Activated CD8-positive, alpha-beta T cell treated with anti-CD3 and anti-CD28 coated beads, Interleukin-2, amount 10 ng/mL, durations not matched to agents 7 days and 5 days (primary cell): ENCODE measurements at regions of chr17 and their contacts with region 1.

Region 1: DNA sequence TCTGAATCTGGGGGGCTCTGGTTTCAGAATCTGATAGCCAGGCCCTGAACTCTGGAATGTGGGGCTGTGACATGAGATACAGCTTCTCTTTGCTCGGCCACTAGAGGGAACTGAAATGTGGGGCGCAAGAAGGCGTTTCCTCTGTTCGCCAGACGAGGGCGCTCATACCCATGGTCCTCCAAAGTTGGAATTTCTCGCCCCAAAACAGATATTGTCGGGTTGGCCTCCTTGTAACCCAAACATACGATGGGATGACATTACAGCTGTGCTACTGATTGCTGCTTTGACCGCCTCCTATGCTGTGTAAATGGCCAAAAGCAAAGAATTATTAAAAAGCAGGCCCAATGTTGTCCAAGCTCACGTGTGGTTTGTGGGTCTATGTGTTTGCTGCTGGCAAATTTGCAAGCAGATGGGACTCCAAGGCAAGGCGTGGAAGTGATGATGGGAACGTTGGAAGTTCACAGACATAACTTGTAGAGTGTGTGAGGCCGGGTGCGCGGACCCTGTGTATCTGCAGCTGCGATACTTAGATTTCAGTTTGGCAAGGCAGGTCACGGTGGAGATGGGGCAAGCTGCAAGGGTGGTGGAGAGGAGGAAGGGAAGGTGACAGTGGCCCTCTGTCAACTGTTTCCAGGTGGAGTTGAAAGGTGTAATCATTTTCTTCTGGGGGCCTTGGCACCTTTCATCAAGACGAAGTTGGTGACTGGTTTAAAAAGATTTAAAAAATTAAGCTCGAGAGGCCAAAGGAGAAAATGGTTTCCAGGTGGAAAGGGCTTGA is 13.0 kb upstream of the MSI2 start:
- DNase-seq: peak; percentile 85
- ATAC-seq: peak; percentile 80
- H3K4me3 Mint-ChIP-seq: no peak overlapping the region
- H3K27ac Mint-ChIP-seq: no peak overlapping the region
- H3K4me1 Mint-ChIP-seq: peaks cover 9% of the 10 kb centered on the region
- H3K27me3 Mint-ChIP-seq: peaks cover 17% of the 10 kb centered on the region

Region 2: DNA sequence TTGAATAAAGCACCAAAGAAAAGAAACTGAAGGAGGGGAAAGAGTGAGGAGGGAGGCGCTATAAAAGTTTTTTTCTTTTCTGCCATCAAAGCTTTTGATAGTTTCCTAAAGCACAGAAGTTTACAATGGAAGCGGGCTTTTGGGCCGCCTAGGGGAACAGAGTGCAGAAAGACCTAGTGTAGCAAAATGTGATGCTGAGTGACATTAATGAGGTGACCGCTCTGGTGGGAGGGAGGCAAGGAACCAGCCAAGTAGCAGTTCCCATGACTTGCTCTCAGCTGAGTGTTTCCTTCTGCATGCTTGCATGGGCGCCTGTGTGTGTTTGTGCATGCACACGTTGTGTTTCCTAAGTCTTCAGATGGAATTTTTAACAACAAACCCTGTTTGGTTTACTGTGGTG is 28.5 kb after region 1 on chr17:
- CTCF ChIA-PET with region 1: interaction called, 23 read pairs
- POLR2A ChIA-PET with region 1: no interaction called
- DNase-seq: no peak
- ATAC-seq: no peak
- H3K4me3 Mint-ChIP-seq: no peak overlapping the region
- H3K27ac Mint-ChIP-seq: no peak overlapping the region
- H3K4me1 Mint-ChIP-seq: peaks cover 41% of the 10 kb centered on the region
- H3K27me3 Mint-ChIP-seq: no peaks in the 10 kb centered on the region

Region 3: GRCh38 chr17:57408071-57408811 is 164.9 kb after region 1 on chr17:
- CTCF ChIA-PET with region 1: interaction called, 62 read pairs
- POLR2A ChIA-PET with region 1: no interaction called
- DNase-seq: peak; percentile 72
- ATAC-seq: peak; percentile 73
- H3K4me3 Mint-ChIP-seq: peak overlapping the region; percentile 59
- H3K27ac Mint-ChIP-seq: peak overlapping the region; percentile 73
- H3K4me1 Mint-ChIP-seq: peaks cover 52% of the 10 kb centered on the region
- H3K27me3 Mint-ChIP-seq: no peaks in the 10 kb centered on the region

Region 4: GRCh38 chr17:57480438-57481196 is 237.3 kb after region 1 on chr17:
- CTCF ChIA-PET with region 1: interaction called, 21 read pairs
- POLR2A ChIA-PET with region 1: no interaction called
- DNase-seq: peak; percentile 53
- ATAC-seq: peak; percentile 73
- H3K4me3 Mint-ChIP-seq: peak overlapping the region; percentile 35
- H3K27ac Mint-ChIP-seq: peak overlapping the region; percentile 71
- H3K4me1 Mint-ChIP-seq: peaks cover 60% of the 10 kb centered on the region
- H3K27me3 Mint-ChIP-seq: no peaks in the 10 kb centered on the region

Region 5: DNA sequence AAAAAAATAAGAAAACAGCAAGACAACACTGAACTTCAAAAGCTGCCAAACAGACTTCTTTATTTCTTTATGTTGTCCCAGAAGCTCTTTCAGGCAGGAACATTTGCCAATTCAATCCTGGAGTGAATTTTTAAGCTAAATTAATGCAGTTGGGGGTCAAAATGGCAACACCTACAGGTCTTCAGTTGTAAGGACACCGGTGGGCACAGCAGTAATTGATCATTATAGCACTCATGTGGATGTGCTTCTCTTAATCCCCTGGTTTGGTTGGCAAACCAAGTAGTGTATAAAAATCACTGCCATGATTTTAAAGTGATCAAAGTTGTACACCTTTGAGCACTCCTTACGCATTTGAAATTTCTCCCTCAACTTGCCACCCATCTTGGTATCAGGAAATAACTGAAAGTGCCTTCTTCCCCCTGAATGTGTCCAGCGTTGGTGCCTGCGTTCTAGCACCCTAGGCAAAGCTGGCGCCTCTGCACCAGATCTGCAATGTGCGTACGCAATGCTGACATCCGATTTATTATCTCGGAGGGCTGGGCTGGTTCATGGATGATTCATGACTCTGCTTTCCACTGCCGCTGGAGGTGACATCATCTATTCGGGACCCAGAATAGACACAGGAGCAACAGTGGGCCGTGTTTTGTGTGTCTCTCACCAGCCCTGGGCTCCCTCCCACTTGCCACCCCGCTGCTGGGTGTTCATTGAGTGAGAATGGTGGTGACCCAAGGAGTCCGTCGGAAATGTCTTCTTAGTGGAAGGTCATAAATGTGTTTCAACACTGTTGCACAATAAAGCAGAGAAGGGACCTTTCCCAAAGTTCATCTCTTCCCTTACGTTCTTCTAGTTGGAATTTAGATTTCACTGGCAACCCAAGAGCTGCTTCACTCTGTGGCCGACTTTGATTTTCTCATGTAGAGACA is 298.4 kb after region 1 on chr17:
- CTCF ChIA-PET with region 1: interaction called, 14 read pairs
- POLR2A ChIA-PET with region 1: no interaction called
- DNase-seq: no peak
- ATAC-seq: no peak
- H3K4me3 Mint-ChIP-seq: no peak overlapping the region
- H3K27ac Mint-ChIP-seq: no peak overlapping the region
- H3K4me1 Mint-ChIP-seq: peaks cover 18% of the 10 kb centered on the region
- H3K27me3 Mint-ChIP-seq: no peaks in the 10 kb centered on the region

Region 6: DNA sequence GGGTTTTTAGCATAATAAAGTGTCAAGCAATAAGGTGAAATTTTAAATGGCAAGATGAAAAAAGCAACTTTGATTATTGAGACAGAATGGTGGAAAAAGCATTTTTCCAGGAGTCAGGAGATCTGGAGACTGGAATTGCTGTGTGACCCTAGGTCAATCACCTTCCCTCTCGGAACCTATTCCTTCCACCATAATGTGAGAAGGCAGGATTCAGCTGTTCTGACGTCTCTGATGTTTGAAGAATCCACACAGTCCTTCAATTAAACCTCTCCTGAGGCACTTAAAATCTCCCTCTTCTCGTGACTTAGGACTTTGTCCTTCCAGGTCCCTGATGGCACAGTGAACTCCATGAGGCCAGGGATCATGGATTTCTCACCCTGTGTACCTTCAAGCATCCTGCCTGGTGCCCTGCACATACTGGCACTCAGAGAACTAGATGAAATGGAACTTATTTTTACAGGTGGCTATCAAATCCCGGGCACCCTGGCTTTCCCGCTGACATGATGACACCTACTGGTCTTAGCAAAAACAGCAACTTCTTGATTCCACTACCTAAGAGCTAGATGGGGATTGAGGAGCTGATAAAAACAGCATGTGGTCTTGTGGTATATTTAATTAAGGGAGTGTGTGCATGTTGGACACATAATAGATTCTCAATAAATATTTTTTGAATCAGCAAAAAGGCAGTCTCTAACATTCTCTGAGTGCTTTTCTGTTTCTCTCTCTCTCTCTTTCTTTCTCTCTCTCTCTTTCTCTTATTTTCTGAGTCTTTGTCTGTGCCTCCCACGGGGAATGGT is 504.1 kb after region 1 on chr17:
- CTCF ChIA-PET with region 1: interaction called, 35 read pairs
- POLR2A ChIA-PET with region 1: no interaction called
- DNase-seq: peak; percentile 68
- ATAC-seq: peak; percentile 77
- H3K4me3 Mint-ChIP-seq: no peak overlapping the region
- H3K27ac Mint-ChIP-seq: no peak overlapping the region
- H3K4me1 Mint-ChIP-seq: peaks cover 29% of the 10 kb centered on the region
- H3K27me3 Mint-ChIP-seq: peaks cover 7% of the 10 kb centered on the region